MCF 10A (cell line): ENCODE measurements at regions of chr1 and their contacts with region 1.

Region 1: DNA sequence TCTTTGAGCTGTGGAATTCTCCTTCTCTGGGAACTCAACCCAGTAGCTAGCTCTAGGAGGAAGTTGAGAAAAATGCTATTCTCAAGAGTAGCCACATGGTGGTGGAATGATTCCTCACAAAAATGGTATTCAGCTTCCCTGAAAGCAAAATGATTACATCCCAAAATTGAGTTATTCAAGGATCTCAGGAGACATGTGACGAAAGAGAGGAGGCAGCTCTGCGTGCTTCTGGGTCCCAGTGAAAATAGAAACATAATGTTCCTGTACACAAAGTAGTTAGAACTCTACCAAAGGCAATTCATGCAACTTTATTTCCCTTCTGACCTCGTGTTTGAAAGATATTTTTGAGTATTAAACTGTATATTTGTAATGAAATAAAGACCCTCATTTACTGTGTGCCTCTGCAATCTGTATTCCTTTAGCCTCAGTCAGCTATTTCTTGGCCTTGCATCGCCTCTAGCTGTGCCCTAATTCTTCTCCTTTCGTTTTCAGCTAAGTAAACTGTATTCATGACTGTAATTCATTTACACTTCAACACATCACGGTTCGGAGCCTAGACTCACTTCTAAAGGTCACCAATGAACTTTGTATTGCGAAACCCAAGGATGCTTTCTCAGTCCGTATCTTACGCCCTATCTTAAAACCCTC is 167.3 kb downstream of the FASLG start:
- DNase-seq: peak; percentile 87
- H3K4me3 Mint-ChIP-seq: no peak overlapping the region
- H3K27ac Mint-ChIP-seq: no peak overlapping the region
- H3K4me1 Mint-ChIP-seq: peaks cover 7% of the 10 kb centered on the region
- H3K27me3 Mint-ChIP-seq: no peaks in the 10 kb centered on the region
- CTCF ChIP-seq: peak; percentile 86

Region 2: DNA sequence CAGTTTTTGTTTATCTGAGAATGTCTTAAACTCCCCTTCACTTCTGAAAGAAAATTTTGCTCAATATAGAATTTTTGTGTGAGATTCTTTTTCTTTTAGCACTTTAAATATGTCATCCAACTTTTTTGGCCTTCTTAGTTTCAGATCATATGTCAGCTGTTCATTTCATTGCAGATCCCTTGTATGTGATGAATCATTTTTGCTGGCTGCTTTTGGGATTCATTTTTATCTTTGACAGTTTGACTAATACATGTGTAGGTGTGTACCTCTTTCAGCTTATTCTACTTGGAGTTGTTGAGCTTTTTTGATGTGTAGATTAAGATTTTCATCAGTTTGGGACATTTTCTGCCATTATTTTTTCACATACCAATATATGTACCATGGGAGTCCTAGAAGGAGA is 10.5 kb before region 1 on chr1:
- CTCF ChIA-PET with region 1: interaction called, 16 read pairs
- POLR2A ChIA-PET with region 1: no interaction called
- intact Hi-C with region 1: no loop called
- DNase-seq: peak; percentile 9
- H3K4me3 Mint-ChIP-seq: no peak overlapping the region
- H3K27ac Mint-ChIP-seq: no peak overlapping the region
- H3K4me1 Mint-ChIP-seq: no peaks in the 10 kb centered on the region
- H3K27me3 Mint-ChIP-seq: no peaks in the 10 kb centered on the region
- CTCF ChIP-seq: no peak

Region 3: GRCh38 chr1:172935062-172935592 is 108.9 kb after region 1 on chr1:
- CTCF ChIA-PET with region 1: interaction called, 5 read pairs
- POLR2A ChIA-PET with region 1: no interaction called
- intact Hi-C with region 1: loop called (anchors 2 kb)
- DNase-seq: no peak
- H3K4me3 Mint-ChIP-seq: no peak overlapping the region
- H3K27ac Mint-ChIP-seq: peak overlapping the region; percentile 89
- H3K4me1 Mint-ChIP-seq: peaks cover 45% of the 10 kb centered on the region
- H3K27me3 Mint-ChIP-seq: no peaks in the 10 kb centered on the region
- CTCF ChIP-seq: no peak

Region 4: GRCh38 chr1:173002891-173003838 is 176.9 kb after region 1 on chr1:
- CTCF ChIA-PET with region 1: no interaction called
- POLR2A ChIA-PET with region 1: no interaction called
- intact Hi-C with region 1: loop called (anchors 1 kb)
- DNase-seq: peak; percentile 95
- H3K4me3 Mint-ChIP-seq: no peak overlapping the region
- H3K27ac Mint-ChIP-seq: peak overlapping the region; percentile 36
- H3K4me1 Mint-ChIP-seq: peaks cover 16% of the 10 kb centered on the region
- H3K27me3 Mint-ChIP-seq: no peaks in the 10 kb centered on the region
- CTCF ChIP-seq: no peak

Region 5: GRCh38 chr1:173190101-173190906 is 364.1 kb after region 1 on chr1:
- CTCF ChIA-PET with region 1: interaction called, 43 read pairs
- POLR2A ChIA-PET with region 1: interaction called, 17 read pairs
- intact Hi-C with region 1: no loop called
- DNase-seq: peak; percentile 100
- H3K4me3 Mint-ChIP-seq: peak overlapping the region; percentile 44
- H3K27ac Mint-ChIP-seq: peak overlapping the region; percentile 93
- H3K4me1 Mint-ChIP-seq: peaks cover 29% of the 10 kb centered on the region
- H3K27me3 Mint-ChIP-seq: no peaks in the 10 kb centered on the region
- CTCF ChIP-seq: no peak

Region 6: DNA sequence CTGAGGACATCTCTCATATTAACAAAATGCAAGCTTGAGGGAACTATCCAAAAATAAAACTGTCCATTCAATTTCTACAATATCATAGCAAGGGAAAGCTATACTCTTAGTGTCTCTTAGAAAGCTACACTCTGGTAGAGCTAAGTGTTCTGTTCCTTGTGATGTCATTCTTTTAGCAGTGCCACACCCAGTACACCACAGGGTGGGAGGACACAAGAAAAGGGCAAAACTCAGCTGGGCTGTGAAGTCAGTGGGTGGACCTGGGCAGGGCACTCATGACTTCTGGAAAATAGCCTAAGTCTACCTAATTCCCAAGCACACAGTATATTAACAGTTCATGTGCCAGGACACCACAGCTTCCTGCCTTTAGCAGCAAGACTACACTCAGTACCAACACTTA is 423.1 kb after region 1 on chr1:
- CTCF ChIA-PET with region 1: interaction called, 11 read pairs
- POLR2A ChIA-PET with region 1: no interaction called
- intact Hi-C with region 1: loop called (anchors 2 kb)
- DNase-seq: peak; percentile 60
- H3K4me3 Mint-ChIP-seq: peak overlapping the region; percentile 2
- H3K27ac Mint-ChIP-seq: peak overlapping the region; percentile 93
- H3K4me1 Mint-ChIP-seq: peaks cover 20% of the 10 kb centered on the region
- H3K27me3 Mint-ChIP-seq: no peaks in the 10 kb centered on the region
- CTCF ChIP-seq: no peak

Region 7: GRCh38 chr1:173420330-173420806 is 594.1 kb after region 1 on chr1:
- CTCF ChIA-PET with region 1: interaction called, 5 read pairs
- POLR2A ChIA-PET with region 1: no interaction called
- intact Hi-C with region 1: loop called (anchors 1 kb)
- DNase-seq: peak; percentile 91
- H3K4me3 Mint-ChIP-seq: no peak overlapping the region
- H3K27ac Mint-ChIP-seq: peak overlapping the region; percentile 9
- H3K4me1 Mint-ChIP-seq: peaks cover 22% of the 10 kb centered on the region
- H3K27me3 Mint-ChIP-seq: no peaks in the 10 kb centered on the region
- CTCF ChIP-seq: peak; percentile 94